ENCODE measurements at regions of chr18 and their contacts with region 1.

Region 1: DNA sequence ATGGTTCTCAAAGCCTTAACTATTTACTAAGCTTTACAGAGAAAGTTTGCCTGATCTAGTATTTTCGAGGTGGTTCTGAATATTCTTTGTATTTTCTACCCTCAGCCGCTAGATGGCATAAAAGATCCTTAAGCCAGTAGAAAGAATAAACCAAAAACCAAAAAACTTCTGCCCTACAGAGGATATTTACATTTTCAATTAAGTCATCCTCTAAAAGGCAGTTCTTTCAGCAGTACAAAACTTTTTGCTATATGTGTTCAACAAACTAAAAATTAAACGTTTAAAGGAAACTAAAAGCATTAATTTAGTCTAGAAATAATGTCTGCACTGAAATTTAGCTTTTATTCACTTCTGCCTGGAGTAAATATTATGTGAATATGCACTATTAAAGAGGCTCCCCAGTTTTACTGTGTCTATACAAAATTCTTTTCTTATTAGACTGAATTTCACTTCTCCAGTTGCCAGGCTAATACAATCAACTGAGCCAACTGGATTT is 297.5 kb downstream of the PIEZO2 start:
- DNase-seq: peak; percentile 68
- H3K4me3 ChIP-seq: no peak overlapping the region
- H3K27ac ChIP-seq: no peak overlapping the region
- H3K4me1 ChIP-seq: no peaks in the 10 kb centered on the region
- H3K27me3 ChIP-seq: peaks cover 20% of the 10 kb centered on the region

Region 2: DNA sequence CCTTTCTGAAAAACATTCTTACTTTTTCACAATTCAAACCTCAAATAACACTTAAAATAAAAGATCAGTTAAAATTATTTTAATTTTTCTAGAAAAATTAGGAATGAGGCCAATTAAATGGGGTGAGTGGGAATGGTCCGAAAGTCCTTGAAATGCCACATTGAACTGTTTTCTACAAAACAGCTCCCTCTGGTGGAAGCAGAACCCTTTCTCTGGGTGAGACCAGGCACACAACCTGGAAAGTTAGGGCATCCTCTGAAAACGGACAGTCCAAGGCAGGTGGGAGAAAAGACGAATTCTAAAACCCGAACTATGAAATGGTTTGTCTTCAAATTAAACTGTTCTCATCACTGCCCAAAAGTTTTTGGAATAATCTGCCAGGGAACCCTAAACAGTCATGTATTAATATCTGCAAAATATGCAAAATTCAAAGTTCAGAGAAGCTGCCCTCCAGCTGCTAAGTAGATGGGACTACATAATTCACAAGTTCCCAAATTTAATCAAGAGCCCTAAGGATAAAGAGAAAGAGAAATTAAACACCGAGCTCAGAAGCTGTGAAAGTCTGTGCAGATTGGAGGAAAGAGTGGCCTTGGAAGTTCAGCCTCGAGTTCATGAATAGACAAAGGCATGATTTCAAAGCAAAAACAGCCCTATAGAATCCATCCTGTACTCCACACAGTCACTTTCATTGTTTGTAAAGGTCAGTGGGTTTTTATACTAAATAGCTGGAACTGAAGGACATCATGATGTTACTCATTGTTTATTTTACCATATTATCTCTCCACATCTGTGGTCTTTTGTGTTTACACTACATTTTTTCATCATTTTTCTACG is 189.2 kb after region 1 on chr18:
- in situ Hi-C with region 1: loop called (anchors 10 kb)
- DNase-seq: peak; percentile 72
- H3K4me3 ChIP-seq: no peak overlapping the region
- H3K27ac ChIP-seq: no peak overlapping the region
- H3K4me1 ChIP-seq: no peaks in the 10 kb centered on the region
- H3K27me3 ChIP-seq: peaks cover 11% of the 10 kb centered on the region; the same call in 1 of the 2 replicates

Region 3: DNA sequence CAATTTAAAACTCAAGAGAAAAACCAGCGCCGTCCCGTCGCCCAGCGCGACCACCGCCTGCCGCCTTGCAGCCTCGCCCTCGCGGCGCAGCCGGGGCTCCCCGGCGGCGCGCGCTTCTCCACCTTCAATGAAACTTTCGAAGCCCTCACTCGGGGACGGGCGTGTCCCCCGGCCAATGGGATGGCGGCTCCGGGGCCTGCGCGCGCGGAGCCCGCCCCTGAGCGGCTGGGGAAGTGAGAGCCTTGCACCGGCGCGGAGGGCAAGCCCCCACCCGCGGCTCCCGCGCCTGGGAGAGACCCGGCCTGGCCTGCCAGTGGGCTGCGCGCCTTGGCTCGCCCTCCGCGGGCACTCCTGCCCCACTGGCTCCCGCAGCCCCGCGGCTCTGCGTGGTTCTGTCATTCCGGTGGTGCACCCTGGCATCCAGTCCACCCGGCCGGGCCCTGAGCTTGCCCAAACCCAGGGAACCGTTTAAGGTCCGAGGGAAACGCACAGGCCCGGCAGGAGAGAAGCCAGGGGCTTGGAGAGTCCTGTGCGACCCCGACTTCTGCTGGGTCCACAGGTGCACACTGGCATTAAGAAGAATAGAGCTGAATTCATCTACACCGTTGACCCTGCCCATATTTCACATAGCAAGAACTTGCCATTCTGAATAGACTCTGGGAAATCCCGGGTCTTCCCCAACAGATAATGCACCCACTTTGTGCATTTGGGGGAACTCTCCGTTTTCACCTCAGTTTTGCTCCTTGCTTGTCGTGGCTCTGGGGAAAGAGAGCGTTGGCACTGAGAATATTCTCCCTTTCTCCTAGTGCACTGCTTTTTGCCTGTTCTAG is 297.8 kb after region 1 on chr18 and contains the start of gene PIEZO2:
- in situ Hi-C with region 1: loop called (anchors 25 kb)
- DNase-seq: peak; percentile 57
- H3K4me3 ChIP-seq: peak within 1 kb of the TSS; percentile 67
- H3K27ac ChIP-seq: no peak within 1 kb of the TSS
- H3K4me1 ChIP-seq: no peaks in the 10 kb centered on the region
- H3K27me3 ChIP-seq: peaks cover 51% of the 10 kb centered on the region
- total RNA-seq, gene PIEZO2: 1.1 and 1.5 TPM in 2 replicates

Region 4: DNA sequence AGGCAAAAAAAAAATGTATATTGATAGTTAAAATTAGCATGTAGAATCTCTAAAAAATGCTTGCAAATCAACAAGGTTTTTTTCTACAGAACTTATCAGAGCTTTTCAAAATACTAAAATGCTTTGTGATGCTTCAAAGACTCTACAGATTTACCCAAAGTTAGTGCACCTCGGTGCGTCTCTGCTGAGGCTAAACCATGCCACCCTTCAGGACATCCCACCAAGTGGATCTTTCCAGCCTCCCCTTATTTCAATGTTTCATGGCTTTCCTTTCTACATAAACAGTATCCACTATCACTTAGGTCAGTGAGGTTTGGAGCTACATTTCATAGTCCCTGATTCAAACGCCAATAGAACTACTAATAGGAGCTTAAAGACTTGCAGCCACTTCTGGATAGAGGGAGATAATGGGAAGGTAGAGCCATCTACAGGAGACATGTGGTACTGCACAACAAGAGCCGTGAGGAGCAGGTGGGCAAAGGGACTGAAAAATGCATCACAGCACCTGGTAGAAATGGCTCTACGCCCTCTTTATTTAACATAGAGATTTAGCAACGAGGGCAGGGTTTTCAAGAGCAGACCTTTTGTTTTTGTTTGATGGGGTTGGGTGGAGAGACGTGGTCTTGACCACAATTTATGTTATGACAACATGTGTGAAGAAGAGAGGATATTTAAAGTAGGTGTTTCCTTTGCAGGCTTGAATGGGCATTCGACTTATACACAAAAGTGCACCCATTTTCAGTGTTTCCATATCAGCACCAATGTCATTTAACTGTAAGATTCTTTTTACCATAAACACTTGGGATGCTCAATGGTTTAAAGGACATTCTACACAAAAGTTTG is 701.4 kb after region 1 on chr18:
- in situ Hi-C with region 1: loop called (anchors 10 kb)
- DNase-seq: peak; percentile 67
- H3K4me3 ChIP-seq: no peak overlapping the region
- H3K27ac ChIP-seq: no peak overlapping the region
- H3K4me1 ChIP-seq: no peaks in the 10 kb centered on the region
- H3K27me3 ChIP-seq: peaks cover 22% of the 10 kb centered on the region